ENCODE measurements at regions of chr2 and their contacts with region 1.

Region 1: DNA sequence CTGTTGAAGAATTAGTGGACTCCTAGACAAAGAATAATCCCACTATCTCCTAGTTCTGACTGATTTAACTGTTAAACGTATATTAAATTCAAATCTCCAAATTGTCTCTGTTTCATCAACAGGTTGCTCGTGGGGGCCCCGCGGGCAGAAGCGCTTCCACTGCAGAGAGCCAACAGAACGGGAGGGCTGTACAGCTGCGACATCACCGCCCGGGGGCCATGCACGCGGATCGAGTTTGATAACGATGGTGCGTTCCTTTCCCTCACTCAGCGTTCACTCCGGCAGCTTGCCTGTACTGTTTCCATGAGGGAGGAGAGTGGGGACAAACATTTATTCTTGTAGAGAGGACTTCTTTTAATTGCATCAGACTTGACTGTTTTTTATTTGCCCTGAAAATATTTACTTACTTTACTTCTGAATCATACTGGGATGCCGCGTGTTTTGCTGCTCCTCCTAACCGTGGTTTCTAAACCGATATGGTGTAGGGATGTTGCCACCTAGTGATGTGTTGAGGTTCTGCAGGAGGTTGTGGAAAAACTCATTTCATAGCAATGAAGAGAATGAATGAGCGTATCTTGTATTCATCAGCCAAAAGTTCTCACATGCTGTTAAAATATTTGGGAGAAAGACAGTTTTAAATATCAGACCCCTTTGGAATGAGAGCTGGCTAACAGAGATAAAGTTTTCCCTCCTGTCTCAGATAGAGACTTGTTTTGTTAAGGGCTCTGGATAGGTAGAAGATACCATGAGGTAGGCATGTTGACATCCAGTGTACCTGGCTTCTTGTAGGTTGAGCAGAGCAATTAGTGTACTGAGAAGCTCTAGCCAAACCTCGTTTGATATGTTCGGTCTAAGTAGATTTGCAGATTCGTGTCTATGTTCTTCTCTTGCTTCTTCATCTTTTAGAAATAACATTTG is 38.3 kb downstream of the ITGA6 start:
- DNase-seq: peak; percentile 83
- H3K4me3 Mint-ChIP-seq: no peak overlapping the region
- H3K27ac Mint-ChIP-seq: peak overlapping the region; percentile 96
- H3K4me1 Mint-ChIP-seq: peaks cover 59% of the 10 kb centered on the region
- H3K27me3 Mint-ChIP-seq: no peaks in the 10 kb centered on the region

Region 2: DNA sequence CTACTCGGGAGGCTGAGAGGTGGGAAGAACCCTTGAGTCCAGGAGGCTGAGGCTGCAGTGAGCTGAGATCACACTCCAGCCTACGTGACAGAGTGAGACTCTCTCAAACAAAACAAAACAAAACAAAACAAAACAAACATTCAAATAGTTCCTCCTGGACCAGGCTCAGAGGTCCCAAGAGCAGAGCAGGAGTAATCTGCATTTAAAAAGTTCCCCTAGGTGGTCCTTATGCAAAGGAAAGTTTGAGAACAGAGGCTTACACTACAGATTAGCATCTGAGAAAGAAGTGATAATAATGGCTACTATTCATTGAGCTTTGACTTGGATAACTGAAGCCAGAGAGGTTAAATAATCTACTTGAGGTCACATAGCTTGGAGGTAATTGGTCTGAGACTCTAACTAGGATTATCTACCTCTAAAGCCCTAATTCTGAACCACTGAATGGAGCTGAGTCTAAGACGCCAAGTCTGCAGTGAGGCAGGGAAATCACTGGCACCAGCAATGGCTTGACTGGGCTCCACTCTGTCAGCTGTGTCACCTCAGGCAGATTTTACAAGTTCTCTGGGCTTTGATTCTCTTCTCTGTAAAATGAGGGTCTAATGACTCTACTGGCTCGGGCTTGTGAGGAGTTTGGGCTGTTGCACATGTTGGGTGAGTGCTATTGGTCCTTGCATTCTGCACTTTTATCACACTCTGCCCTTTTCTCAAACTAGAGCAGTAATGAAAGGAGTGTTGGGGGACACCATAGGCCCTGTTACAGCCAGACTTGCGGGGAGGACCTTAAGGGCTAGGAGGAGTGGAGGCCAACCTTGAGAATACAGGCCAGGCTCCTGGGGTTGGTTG is 333.7 kb before region 1 on chr2:
- CTCF ChIA-PET with region 1: interaction called, 27 read pairs
- DNase-seq: no peak
- H3K4me3 Mint-ChIP-seq: no peak overlapping the region
- H3K27ac Mint-ChIP-seq: no peak overlapping the region
- H3K4me1 Mint-ChIP-seq: no peaks in the 10 kb centered on the region
- H3K27me3 Mint-ChIP-seq: peaks cover 34% of the 10 kb centered on the region

Region 3: DNA sequence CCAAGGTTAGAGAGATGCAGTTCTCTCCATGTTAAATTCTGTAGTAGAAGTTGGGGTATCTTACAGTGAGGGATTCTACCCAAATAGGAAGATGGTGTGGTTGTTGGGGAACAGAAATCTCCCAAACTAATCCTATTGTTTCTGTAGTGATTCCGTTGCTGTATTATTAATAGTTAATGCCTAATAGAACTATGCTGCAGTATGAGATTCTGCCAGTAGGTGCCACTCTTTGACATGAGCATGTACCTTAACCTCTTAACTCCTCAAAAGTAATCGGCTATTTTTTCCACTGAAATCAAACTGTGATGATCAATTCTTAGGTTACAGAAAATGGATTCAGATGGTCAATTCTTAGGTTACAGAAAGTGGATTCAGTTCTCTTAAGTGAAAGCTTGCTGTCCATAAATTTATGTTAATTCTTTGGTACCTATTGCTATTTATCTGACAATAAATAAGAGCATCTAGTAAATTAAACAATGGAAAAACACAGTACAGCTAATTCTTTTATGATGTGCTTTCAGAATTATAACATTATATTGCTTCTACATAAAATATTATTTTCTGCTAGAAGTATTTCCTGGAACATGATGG is 265.1 kb before region 1 on chr2:
- CTCF ChIA-PET with region 1: interaction called, 16 read pairs
- DNase-seq: peak; percentile 51
- H3K4me3 Mint-ChIP-seq: no peak overlapping the region
- H3K27ac Mint-ChIP-seq: no peak overlapping the region
- H3K4me1 Mint-ChIP-seq: peaks cover 18% of the 10 kb centered on the region
- H3K27me3 Mint-ChIP-seq: peaks cover 22% of the 10 kb centered on the region

Region 4: DNA sequence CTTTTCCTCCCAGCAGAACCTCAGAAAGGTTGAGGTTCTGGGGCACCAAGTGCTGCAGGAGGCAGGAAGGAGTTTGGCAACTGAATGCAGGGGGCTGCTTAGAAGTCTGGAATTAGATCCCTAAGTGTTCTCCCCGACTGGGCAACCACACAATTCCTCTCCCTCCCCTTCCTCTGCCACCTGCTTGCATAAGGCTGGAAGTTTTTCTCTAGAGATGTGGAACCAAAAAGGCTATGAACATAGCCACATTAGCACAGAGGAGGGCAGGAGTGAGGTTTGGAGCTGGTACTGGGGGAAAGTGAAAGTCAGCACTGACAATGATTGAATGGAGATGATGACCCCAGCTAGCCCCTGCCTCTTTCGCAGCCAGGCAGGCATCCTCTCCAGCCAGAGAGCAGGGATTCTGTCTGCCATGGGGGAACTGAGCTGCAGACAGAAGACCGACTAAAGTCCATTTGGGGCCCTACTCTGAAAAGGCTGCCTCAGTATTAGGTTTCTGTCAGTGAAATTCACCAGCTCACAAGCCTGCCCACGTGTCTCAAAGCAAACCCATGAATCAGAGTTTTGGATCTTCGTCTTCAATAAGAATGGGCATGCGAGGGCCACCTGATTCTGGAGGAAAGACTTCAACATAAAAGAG is 126.2 kb before region 1 on chr2:
- CTCF ChIA-PET with region 1: interaction called, 16 read pairs
- DNase-seq: peak; percentile 21
- H3K4me3 Mint-ChIP-seq: peak overlapping the region; percentile 16
- H3K27ac Mint-ChIP-seq: no peak overlapping the region
- H3K4me1 Mint-ChIP-seq: peaks cover 25% of the 10 kb centered on the region
- H3K27me3 Mint-ChIP-seq: peaks cover 20% of the 10 kb centered on the region

Region 5: DNA sequence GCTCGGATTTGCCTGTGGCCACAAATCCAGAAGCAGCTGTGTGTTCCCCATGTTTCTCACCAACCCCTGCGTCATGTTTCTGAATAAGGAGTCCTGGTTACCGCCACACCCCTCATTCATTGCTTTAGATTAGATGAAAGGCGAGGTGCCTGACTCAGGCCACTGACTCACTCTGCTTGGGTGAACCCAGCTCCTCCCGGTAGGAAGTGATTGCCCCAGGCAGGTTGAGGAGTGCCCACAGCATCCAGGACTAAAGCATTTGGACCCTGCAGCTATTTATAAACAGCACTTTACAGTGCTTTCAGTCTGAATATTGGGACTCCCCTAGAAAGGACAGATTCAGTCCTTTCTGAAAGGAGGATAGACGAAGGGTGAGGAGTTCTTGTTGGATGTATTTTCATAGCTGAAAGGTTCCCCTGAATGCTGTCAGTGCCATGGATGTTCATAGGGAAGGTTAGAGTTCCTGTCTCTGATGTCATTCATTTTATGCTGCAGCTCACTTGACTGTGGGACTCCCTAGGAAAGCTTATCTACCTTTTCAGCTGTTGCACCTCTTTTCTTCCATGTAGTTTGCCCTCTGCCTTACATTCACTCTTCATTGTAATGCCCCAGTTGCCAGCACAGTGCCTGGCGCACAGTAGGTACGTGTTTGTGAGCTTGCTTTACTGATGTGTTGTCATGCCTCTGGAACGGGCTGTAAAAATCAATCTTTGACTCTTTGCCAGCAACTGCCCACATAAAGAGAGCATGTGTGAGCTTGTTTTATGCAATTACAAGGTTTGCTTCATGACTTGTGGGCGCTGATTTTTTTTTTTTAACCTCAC is 23.4 kb before region 1 on chr2:
- CTCF ChIA-PET with region 1: interaction called, 72 read pairs
- DNase-seq: peak; percentile 60
- H3K4me3 Mint-ChIP-seq: peak overlapping the region; percentile 62
- H3K27ac Mint-ChIP-seq: peak overlapping the region; percentile 81
- H3K4me1 Mint-ChIP-seq: peaks cover 48% of the 10 kb centered on the region
- H3K27me3 Mint-ChIP-seq: no peaks in the 10 kb centered on the region

Region 6: DNA sequence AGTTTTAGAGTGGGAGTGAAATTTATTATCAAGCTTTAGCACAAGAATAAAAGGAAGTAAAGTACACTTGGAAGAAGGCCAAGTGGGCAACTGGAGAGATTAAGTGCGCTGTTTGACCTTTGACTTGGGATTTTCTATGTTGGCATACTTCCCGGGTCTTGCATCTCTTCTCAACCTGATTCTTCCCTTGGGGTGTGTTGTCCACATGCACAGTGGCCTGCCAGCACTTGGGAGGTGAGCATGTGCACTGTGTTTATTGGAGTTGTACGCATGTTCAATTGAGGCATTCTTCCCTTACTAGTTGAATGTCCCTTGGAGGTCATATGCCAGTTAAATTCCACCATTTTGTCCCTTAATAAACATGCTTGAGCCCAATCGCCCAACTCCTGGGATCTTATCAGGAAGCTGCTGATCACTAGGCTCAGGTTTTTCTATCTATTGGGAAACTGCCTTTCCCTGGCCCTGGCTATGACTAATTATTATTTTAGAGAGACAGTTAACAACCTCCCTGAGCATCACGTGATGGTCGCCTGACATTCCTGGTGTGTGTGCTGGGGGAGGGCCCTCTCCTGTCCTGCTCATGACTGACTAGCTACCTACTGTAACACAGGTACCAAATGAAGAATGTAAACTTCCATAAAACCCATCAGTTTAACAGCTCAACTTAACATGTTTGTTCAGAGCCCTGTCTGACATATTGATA is 207.5 kb after region 1 on chr2:
- CTCF ChIA-PET with region 1: no interaction called
- DNase-seq: no peak
- H3K4me3 Mint-ChIP-seq: no peak overlapping the region
- H3K27ac Mint-ChIP-seq: no peak overlapping the region
- H3K4me1 Mint-ChIP-seq: peaks cover 3% of the 10 kb centered on the region
- H3K27me3 Mint-ChIP-seq: peaks cover 7% of the 10 kb centered on the region

Region 7: GRCh38 chr2:172845028-172845630 is 379.5 kb after region 1 on chr2:
- CTCF ChIA-PET with region 1: no interaction called
- DNase-seq: no peak
- H3K4me3 Mint-ChIP-seq: no peak overlapping the region
- H3K27ac Mint-ChIP-seq: no peak overlapping the region
- H3K4me1 Mint-ChIP-seq: no peaks in the 10 kb centered on the region
- H3K27me3 Mint-ChIP-seq: peaks cover 9% of the 10 kb centered on the region

Measured in activated naive CD4-positive, alpha-beta T cell treated with anti-CD3 and anti-CD28 coated beads, Interleukin-2, amount 10 ng/mL, durations not matched to agents 7 days and 5 days (primary cell).